CD4-positive, alpha-beta memory T cell (primary cell): ENCODE measurements at regions of chr1 and their contacts with region 1.

Region 1: GRCh38 chr1:15617175-15617880 is at the start of gene DDI2:
- DNase-seq: peak; percentile 91 to 97 (median 93)
- H3K4me3 ChIP-seq: peak within 1 kb of the TSS; percentile 68 to 93
- H3K4me3 Mint-ChIP-seq: peak within 1 kb of the TSS; percentile 92 to 94 (median 93)
- H3K27ac ChIP-seq: peak within 1 kb of the TSS; percentile 86
- H3K27ac Mint-ChIP-seq: peak within 1 kb of the TSS; percentile 76 to 98 (median 96)
- H3K4me1 ChIP-seq: peaks cover 50% of the 10 kb centered on the region
- H3K4me1 Mint-ChIP-seq: peaks cover 27 to 55% (median 41%) of the 10 kb centered on the region in 4 donors
- H3K27me3 ChIP-seq: no peaks in the 10 kb centered on the region
- H3K27me3 Mint-ChIP-seq: no peaks in the 10 kb centered on the region
- total RNA-seq, gene DDI2: 46.2 to 47.6 TPM

Region 2: GRCh38 chr1:15578921-15579682 is 38.2 kb before region 1 on chr1:
- CTCF ChIA-PET with region 1: interaction called, 3 read pairs
- POLR2A ChIA-PET with region 1: interaction called, 34 read pairs
- intact Hi-C with region 1: loop called (anchors 1 kb)
- DNase-seq: peak in 4 of 5 donors; percentile 52 to 65 (median 56)
- H3K4me3 ChIP-seq: peak overlapping the region in 1 of 2 donors; percentile 47
- H3K4me3 Mint-ChIP-seq: peak overlapping the region; percentile 21 to 82 (median 64)
- H3K27ac ChIP-seq: peak overlapping the region; percentile 44
- H3K27ac Mint-ChIP-seq: peak overlapping the region; percentile 91 to 96 (median 95)
- H3K4me1 ChIP-seq: peaks cover 50% of the 10 kb centered on the region
- H3K4me1 Mint-ChIP-seq: peaks cover 28 to 63% (median 49%) of the 10 kb centered on the region in 4 donors
- H3K27me3 ChIP-seq: no peaks in the 10 kb centered on the region
- H3K27me3 Mint-ChIP-seq: no peaks in the 10 kb centered on the region